ENCODE measurements at regions of chrX and their contacts with region 1.

Region 1: GRCh38 chrX:101415180-101416145 is 7.4 kb downstream of the HNRNPH2 start:
- DNase-seq: no peak
- ATAC-seq: peak; percentile 60
- H3K4me3 Mint-ChIP-seq: peak overlapping the region; percentile 52
- H3K27ac Mint-ChIP-seq: peak overlapping the region; percentile 80
- H3K4me1 Mint-ChIP-seq: peaks cover 60% of the 10 kb centered on the region
- H3K27me3 Mint-ChIP-seq: no peaks in the 10 kb centered on the region
- CTCF ChIP-seq: no peak

Region 2: DNA sequence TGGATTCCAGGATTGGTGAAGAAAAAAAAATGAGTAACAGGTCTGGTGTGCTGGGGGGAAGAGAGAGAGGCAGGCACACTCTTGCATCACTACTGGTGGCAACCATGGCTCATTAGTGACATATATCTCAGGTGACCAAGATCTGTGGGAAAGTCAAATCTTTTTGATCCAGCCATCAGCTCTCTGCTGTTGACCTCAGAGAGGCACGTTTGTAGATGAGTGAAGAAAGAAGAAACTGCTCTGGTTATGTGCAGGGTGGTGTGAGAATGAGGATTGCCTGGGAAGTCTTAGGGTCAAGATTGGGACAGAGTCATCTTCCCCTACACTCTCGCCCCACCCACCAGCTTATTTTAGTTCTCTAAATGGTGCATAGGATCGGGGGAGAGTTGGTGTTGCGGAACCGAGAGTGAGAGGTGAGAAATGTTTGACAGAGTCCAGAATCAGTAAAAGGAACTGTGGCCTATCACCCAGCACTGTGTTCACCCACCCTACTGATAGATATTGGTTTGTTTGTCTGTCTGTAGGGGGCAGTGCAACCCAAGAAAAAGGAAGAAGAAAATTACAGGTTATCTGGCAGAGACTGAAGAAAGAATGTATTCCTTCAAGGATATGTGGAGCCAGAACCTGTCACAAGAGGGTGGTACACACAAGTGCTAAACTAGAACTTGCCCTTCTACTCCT is 180.4 kb after region 1 on chrX:
- CTCF ChIA-PET with region 1: interaction called, 3 read pairs
- POLR2A ChIA-PET with region 1: no interaction called
- intact Hi-C with region 1: loop called (anchors 5 kb)
- DNase-seq: no peak
- ATAC-seq: peak; percentile 94
- H3K4me3 Mint-ChIP-seq: no peak overlapping the region
- H3K27ac Mint-ChIP-seq: peak overlapping the region; percentile 46
- H3K4me1 Mint-ChIP-seq: peaks cover 6% of the 10 kb centered on the region
- H3K27me3 Mint-ChIP-seq: peaks cover 6% of the 10 kb centered on the region
- CTCF ChIP-seq: no peak

Region 3: DNA sequence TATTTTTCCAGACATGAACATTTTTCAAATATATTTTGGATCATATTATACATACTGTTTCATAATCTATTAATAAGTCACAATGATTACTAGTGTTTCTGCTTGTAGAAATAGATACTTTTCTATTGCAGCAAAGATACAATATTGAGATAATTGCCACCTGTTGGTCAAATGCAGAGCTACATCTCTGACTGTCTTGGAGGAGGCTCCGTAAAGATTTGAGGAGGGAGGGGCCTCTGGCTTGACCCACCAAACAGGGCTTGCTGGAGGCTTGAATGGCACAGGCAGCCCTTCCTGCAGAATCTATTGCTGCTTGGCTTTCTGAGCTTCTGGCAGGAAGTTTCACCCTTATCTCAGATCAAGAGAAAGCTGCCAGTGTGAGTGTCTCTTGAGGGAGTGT is 343.5 kb after region 1 on chrX:
- CTCF ChIA-PET with region 1: interaction called, 11 read pairs
- POLR2A ChIA-PET with region 1: interaction called, 3 read pairs
- intact Hi-C with region 1: loop called (anchors 1 kb)
- DNase-seq: no peak
- ATAC-seq: peak; percentile 62
- H3K4me3 Mint-ChIP-seq: no peak overlapping the region
- H3K27ac Mint-ChIP-seq: no peak overlapping the region
- H3K4me1 Mint-ChIP-seq: no peaks in the 10 kb centered on the region
- H3K27me3 Mint-ChIP-seq: peaks cover 7% of the 10 kb centered on the region
- CTCF ChIP-seq: no peak

Region 4: DNA sequence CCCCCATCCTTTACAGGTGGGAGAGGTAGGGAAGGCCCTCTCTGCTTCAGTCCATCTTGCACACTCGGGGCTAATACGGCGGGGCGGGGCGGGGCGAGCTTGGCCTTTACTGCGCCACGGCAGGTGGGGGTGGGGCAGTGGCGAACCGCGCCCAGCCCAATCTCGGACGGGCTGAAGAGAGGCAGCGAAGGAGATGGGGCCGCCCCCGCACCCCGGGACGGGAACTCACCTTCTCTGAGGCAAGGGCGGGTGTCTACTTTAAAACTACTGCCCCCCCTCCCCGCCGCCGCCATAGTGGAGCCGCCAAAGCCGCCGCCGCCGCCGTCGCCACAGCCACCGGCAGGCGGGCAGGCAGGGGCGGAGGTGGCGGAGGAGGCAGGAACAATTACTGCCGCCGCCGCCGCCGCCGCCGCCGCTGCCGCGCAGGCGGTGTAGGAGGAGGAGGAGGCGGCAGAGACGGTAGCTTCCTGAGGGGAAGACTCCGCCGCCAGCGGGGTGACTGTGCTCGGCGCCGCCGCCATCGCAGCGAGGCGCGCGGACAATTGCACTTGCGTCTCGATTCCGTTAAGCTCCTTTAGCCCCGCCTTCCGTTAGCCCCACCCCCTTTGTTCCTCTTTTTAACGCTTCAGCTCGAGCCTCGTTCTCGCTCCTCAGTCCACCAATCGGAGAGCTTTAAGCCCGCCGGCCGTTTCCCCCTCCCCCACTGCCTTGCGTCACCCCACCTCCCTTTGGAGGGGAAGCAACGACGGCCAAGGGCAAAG is 516.2 kb after region 1 on chrX and contains the start of gene ZMAT1:
- CTCF ChIA-PET with region 1: no interaction called
- POLR2A ChIA-PET with region 1: interaction called, 25 read pairs
- intact Hi-C with region 1: no loop called
- DNase-seq: peak; percentile 74
- ATAC-seq: peak; percentile 85
- H3K4me3 Mint-ChIP-seq: peak within 1 kb of the TSS; percentile 87
- H3K27ac Mint-ChIP-seq: peak within 1 kb of the TSS; percentile 93
- H3K4me1 Mint-ChIP-seq: peaks cover 12% of the 10 kb centered on the region
- H3K27me3 Mint-ChIP-seq: no peaks in the 10 kb centered on the region
- CTCF ChIP-seq: no peak
- total RNA-seq, gene ZMAT1: 14.8 and 19.8 TPM in 2 replicates

Region 5: GRCh38 chrX:102863735-102864134 is 1448.3 kb after region 1 on chrX:
- CTCF ChIA-PET with region 1: no interaction called
- POLR2A ChIA-PET with region 1: no interaction called
- intact Hi-C with region 1: loop called (anchors 2 kb)
- DNase-seq: peak; percentile 63
- ATAC-seq: peak; percentile 100
- H3K4me3 Mint-ChIP-seq: no peak overlapping the region
- H3K27ac Mint-ChIP-seq: no peak overlapping the region
- H3K4me1 Mint-ChIP-seq: no peaks in the 10 kb centered on the region
- H3K27me3 Mint-ChIP-seq: no peaks in the 10 kb centered on the region
- CTCF ChIP-seq: no peak

Measured in activated B cell treated with CpG ODN at 0.5 μM for 24 hours (primary cell).